Activated CD4-positive, alpha-beta T cell treated with anti-CD3 and anti-CD28 coated beads, Interleukin-2, amount 10 ng/mL, durations not matched to agents 7 days and 5 days (primary cell): ENCODE measurements at regions of chr20 and their contacts with region 1.

Region 1: GRCh38 chr20:1776681-1777475 is 118.3 kb upstream of the SIRPA start:
- DNase-seq: peak; percentile 81
- H3K4me3 Mint-ChIP-seq: peak overlapping the region; percentile 69
- H3K27ac Mint-ChIP-seq: peak overlapping the region; percentile 71
- H3K4me1 Mint-ChIP-seq: peaks cover 13% of the 10 kb centered on the region
- H3K27me3 Mint-ChIP-seq: peaks cover 5% of the 10 kb centered on the region

Region 2: GRCh38 chr20:1509237-1509636 is 267.6 kb before region 1 on chr20:
- CTCF ChIA-PET with region 1: interaction called, 17 read pairs
- POLR2A ChIA-PET with region 1: no interaction called
- DNase-seq: peak; percentile 51
- H3K4me3 Mint-ChIP-seq: no peak overlapping the region
- H3K27ac Mint-ChIP-seq: no peak overlapping the region
- H3K4me1 Mint-ChIP-seq: no peaks in the 10 kb centered on the region
- H3K27me3 Mint-ChIP-seq: peaks cover 23% of the 10 kb centered on the region

Region 3: GRCh38 chr20:1764136-1765033 is 12.5 kb before region 1 on chr20:
- CTCF ChIA-PET with region 1: interaction called, 12 read pairs
- POLR2A ChIA-PET with region 1: no interaction called
- DNase-seq: peak; percentile 71
- H3K4me3 Mint-ChIP-seq: no peak overlapping the region
- H3K27ac Mint-ChIP-seq: no peak overlapping the region
- H3K4me1 Mint-ChIP-seq: no peaks in the 10 kb centered on the region
- H3K27me3 Mint-ChIP-seq: peaks cover 13% of the 10 kb centered on the region